H1 (cell line): ENCODE measurements at regions of chr19 and their contacts with region 1.

Region 1: GRCh38 chr19:39435499-39436349 is at the start of gene RPS16:
- DNase-seq: peak; percentile 95 to 97
- H3K4me3 ChIP-seq: peak within 1 kb of the TSS; percentile 97 to 99 (median 98)
- H3K27ac ChIP-seq: peak within 1 kb of the TSS; percentile 91
- H3K4me1 ChIP-seq: peaks cover 0 to 10% (median 2%) of the 10 kb centered on the region in 4 experiments; a peak in 6 of 7 replicates
- H3K27me3 ChIP-seq: no peaks in the 10 kb centered on the region; a peak in 1 of 7 replicates
- CTCF ChIP-seq: no peak
- EP300 ChIP-seq: no peak
- POLR2A ChIP-seq: peak; percentile 98 to 100
- RAD21 ChIP-seq: no peak
- total RNA-seq, gene RPS16: 2,433 and 2,482 TPM in 2 replicates

Region 2: DNA sequence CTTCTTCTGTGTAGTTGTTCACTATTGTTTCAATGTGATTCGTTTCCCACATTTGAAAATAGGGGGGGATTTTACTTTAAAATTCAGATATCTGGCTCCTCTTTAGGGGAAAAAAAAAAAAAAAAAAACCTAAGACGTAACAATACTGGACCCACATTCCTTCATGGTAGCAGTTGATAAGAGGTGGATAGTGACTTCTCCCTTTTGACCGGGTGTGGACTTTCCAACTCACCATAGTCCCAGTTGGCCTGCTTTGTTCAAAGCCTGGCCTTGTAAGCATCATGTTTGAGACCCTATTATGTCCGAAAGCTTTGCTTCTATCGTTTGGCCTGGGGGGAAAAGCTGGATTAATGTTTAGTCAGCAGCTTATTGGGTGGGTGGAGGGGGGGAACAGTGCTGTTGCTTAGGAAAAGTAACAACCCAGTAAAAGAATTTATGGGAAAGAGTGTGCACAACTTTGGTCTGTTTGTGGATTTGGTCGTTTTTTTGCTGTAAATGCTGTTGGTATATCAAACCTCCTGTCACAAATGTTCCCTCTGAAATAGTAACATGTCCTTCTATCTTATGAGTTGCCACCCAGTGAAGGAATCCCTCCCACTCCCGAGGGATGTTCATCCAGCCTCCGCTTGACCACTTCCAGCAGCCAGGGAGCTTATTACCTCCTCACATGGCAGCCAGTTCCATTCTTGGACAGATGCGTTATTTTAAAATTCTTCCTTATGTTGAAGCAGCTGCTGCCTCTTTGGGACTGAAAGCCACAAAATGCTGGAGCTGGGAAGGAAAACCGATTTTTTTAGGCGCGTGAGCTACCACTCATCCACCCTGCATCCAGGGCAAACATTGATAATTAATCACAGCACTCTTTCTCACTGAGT is 83.1 kb before region 1 on chr19:
- CTCF ChIA-PET with region 1: no interaction called
- POLR2A ChIA-PET with region 1: no interaction called
- DNase-seq: no peak
- H3K4me3 ChIP-seq: no peak overlapping the region
- H3K27ac ChIP-seq: no peak overlapping the region
- H3K4me1 ChIP-seq: no peaks in the 10 kb centered on the region
- H3K27me3 ChIP-seq: no peaks in the 10 kb centered on the region
- CTCF ChIP-seq: no peak
- EP300 ChIP-seq: no peak
- POLR2A ChIP-seq: no peak
- RAD21 ChIP-seq: no peak

Region 3: GRCh38 chr19:39372941-39373340 is 62.8 kb before region 1 on chr19:
- CTCF ChIA-PET with region 1: no interaction called
- POLR2A ChIA-PET with region 1: no interaction called
- DNase-seq: no peak
- H3K4me3 ChIP-seq: no peak overlapping the region
- H3K27ac ChIP-seq: no peak overlapping the region
- H3K4me1 ChIP-seq: no peaks in the 10 kb centered on the region
- H3K27me3 ChIP-seq: no peaks in the 10 kb centered on the region
- CTCF ChIP-seq: no peak
- EP300 ChIP-seq: no peak
- POLR2A ChIP-seq: no peak
- RAD21 ChIP-seq: no peak

Region 4: DNA sequence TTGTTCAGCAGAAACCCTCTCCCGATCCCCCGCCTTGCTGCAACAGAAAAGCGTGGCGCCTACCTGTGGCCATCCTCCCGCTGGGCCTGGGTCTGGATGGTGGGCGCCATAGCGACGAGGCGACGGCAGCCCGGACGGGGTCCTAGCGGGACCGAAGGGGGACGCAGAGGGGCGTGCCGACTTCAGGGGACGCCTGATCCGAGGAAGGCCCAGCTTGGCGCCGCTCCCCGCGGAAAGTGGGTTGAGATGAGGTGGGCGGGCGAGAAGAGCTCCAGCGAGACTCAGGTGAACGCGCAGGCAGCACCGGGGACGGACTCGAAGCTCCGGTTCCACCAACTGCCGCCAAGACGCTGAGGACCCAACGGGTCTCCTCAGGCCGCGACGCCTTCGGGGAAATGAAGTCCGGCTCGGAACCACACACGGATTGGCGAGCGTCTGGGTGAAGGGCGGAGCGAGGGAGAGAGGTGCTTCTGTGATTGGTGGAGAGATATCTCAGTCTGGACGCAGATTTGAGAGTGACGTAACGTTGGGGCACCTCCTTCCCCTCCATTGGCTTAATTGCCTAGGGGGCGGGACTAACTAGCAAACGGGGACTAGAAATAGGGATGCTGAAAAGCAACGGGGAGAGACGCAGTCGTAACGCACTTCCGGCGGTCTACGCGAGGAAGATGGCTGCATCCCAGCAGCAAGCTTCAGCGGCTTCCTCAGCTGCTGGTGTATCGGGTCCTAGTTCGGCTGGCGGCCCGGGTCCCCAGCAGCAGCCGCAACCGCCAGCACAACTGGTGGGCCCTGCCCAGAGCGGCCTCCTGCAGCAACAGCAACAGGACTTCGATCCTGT is 44.8 kb before region 1 on chr19 and contains the starts of genes MED29 and PAF1:
- CTCF ChIA-PET with region 1: no interaction called
- POLR2A ChIA-PET with region 1: interaction called, 182 read pairs
- DNase-seq: peak; percentile 91 to 99
- H3K4me3 ChIP-seq: peak within 1 kb of the TSS; percentile 91 to 97 (median 96)
- H3K27ac ChIP-seq: peak within 1 kb of the TSS; percentile 99
- H3K4me1 ChIP-seq: peaks cover 2 to 10% (median 7%) of the 10 kb centered on the region in 4 experiments
- H3K27me3 ChIP-seq: no peaks in the 10 kb centered on the region
- CTCF ChIP-seq: peak in 1 of 3 experiments; percentile 22; a peak in 2 of 4 replicates
- EP300 ChIP-seq: peak in 1 of 2 experiments; percentile 29; a peak in 1 of 3 replicates
- POLR2A ChIP-seq: peak; percentile 93 to 98
- RAD21 ChIP-seq: no peak
- total RNA-seq, gene MED29: 31.1 and 32.3 TPM in 2 replicates
- total RNA-seq, gene PAF1: 31.4 and 33.1 TPM in 2 replicates

Region 5: DNA sequence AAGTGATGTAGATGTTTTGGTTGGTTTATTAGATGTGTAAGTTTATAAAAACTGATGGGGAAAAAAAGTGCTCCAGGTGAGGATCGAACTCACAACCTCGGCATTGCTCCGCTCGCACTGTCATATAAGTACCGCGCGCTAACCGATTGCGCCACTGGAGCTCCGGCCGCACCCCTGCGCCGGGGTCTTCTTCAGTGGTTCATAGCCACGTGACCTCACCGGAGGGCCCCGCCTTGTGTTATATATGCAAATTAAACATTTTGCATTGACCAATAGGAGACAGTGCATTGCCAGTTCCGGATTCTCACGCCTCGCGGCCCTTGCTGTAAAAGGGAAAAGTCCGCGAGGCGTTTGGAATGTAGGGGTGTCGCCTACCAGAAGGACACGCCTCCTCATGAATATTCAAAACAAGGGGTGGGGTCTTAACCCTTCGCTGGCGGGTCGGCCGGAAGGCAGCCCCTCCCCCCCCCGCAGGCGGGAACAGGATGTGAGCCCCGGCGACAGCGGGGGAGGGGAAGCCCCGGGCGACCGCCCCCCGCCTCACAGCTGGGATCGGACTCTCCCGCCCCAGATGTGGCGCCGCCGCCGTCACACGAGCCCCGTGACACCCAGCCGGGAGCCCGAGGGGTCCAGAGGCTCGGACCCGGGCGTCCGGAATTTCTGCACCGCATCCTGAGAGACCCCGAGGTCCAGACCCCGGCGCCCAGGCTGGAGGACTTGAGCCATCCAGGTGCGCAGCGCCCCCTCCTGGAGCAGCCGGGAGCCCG is 23.4 kb before region 1 on chr19 and contains the start of gene PLEKHG2:
- CTCF ChIA-PET with region 1: interaction called, 11 read pairs
- POLR2A ChIA-PET with region 1: interaction called, 1,154 read pairs
- DNase-seq: peak; percentile 99 to 100
- H3K4me3 ChIP-seq: peak within 1 kb of the TSS; percentile 66 to 97 (median 92)
- H3K27ac ChIP-seq: peak within 1 kb of the TSS; percentile 83
- H3K4me1 ChIP-seq: peaks cover 10 to 42% (median 21%) of the 10 kb centered on the region in 4 experiments; a peak in 6 of 7 replicates
- H3K27me3 ChIP-seq: no peaks in the 10 kb centered on the region
- CTCF ChIP-seq: peak; percentile 76 to 85 (median 81)
- EP300 ChIP-seq: no peak
- POLR2A ChIP-seq: peak; percentile 68 to 93
- RAD21 ChIP-seq: peak; percentile 35 to 52; a peak in 3 of 4 replicates
- total RNA-seq, gene PLEKHG2: 64.0 and 65.7 TPM in 2 replicates

Region 6: DNA sequence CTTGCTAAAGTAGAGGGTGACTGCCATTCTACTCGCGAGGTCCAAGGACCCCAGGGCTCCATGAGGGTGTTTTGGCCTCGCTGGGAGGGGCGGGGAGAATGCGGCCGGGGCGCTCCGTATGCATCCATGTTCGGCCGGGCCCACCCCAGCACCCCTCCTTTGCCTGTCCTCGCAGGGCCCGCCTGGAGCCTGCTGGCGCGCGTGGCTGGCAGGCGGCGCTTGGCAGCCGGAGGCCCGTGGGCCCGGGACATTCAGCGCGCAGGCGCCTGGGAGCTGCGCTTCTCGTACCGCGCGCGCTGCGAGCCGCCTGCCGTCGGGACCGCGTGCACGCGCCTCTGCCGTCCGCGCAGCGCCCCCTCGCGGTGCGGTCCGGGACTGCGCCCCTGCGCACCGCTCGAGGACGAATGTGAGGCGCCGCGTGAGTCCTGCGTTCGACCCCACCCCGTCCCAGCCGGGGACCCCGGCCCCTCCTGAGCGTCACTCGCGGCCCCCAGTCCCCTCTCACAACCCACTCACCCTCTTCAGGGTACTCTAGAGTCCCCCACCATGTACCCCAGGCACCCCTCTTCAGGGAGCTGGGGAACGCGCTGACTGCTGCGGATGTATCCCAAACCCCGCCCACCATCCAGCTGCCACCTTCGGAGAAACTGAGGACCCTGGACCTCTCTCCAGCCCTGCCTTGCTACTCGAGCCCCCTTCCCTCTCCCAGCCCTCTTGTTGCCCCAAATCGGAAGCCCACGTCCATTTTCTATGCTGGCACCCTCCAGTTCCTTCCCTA is 67.1 kb after region 1 on chr19:
- CTCF ChIA-PET with region 1: no interaction called
- POLR2A ChIA-PET with region 1: interaction called, 16 read pairs
- DNase-seq: peak in 1 of 2 experiments; percentile 93
- H3K4me3 ChIP-seq: peak overlapping the region in 1 of 4 experiments; percentile 37; a peak in 1 of 8 replicates
- H3K27ac ChIP-seq: no peak overlapping the region
- H3K4me1 ChIP-seq: peaks cover 3 to 10% (median 5%) of the 10 kb centered on the region in 4 experiments; a peak in 5 of 7 replicates
- H3K27me3 ChIP-seq: peaks cover 36 to 95% (median 85%) of the 10 kb centered on the region in 4 experiments
- CTCF ChIP-seq: peak; percentile 90 to 97 (median 93)
- EP300 ChIP-seq: no peak
- POLR2A ChIP-seq: no peak
- RAD21 ChIP-seq: peak in 1 of 2 experiments; percentile 56; a peak in 2 of 4 replicates

Region 7: GRCh38 chr19:39524495-39524894 is 88.8 kb after region 1 on chr19:
- CTCF ChIA-PET with region 1: no interaction called
- POLR2A ChIA-PET with region 1: interaction called, 18 read pairs
- DNase-seq: no peak
- H3K4me3 ChIP-seq: no peak overlapping the region
- H3K27ac ChIP-seq: no peak overlapping the region
- H3K4me1 ChIP-seq: peaks cover 0 to 2% (median 0%) of the 10 kb centered on the region in 4 experiments; a peak in 1 of 7 replicates
- H3K27me3 ChIP-seq: no peaks in the 10 kb centered on the region
- CTCF ChIP-seq: no peak
- EP300 ChIP-seq: no peak
- POLR2A ChIP-seq: no peak
- RAD21 ChIP-seq: no peak

Region 8: GRCh38 chr19:39555883-39556282 is 120.2 kb after region 1 on chr19:
- CTCF ChIA-PET with region 1: no interaction called
- POLR2A ChIA-PET with region 1: no interaction called
- DNase-seq: no peak
- H3K4me3 ChIP-seq: no peak overlapping the region
- H3K27ac ChIP-seq: no peak overlapping the region
- H3K4me1 ChIP-seq: no peaks in the 10 kb centered on the region
- H3K27me3 ChIP-seq: no peaks in the 10 kb centered on the region
- CTCF ChIP-seq: no peak
- EP300 ChIP-seq: no peak
- POLR2A ChIP-seq: no peak
- RAD21 ChIP-seq: no peak